ENCODE measurements at regions of chrX and their contacts with region 1.

Region 1: GRCh38 chrX:136780763-136781162 is at the start of gene ARHGEF6:
- DNase-seq: no peak
- H3K4me3 Mint-ChIP-seq: peak within 1 kb of the TSS; percentile 90
- H3K27ac Mint-ChIP-seq: peak within 1 kb of the TSS; percentile 97
- H3K4me1 Mint-ChIP-seq: peaks cover 56% of the 10 kb centered on the region
- H3K27me3 Mint-ChIP-seq: no peaks in the 10 kb centered on the region
- total RNA-seq, gene ARHGEF6: 77.2 and 77.9 TPM in 2 replicates

Region 2: DNA sequence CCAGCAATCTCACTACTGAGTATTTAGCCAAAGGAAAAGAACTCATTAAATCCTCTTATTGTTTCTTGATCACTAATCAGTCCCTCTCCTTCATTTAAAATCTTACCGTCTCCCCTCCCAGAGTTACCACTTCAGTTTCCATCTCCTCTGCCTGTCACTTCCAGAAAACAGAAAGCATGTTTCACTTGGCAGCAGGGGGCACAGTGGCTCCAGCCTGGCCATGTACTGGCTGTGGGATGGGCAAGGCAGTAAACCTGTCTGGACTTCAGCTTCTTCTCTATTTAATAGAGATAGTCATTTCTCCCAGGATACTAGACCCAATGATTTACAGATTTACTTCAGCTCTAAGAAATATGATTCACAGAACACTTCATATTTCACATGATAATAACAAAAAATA is 69.6 kb before region 1 on chrX:
- intact Hi-C with region 1: loop called (anchors 5 kb)
- DNase-seq: no peak
- H3K4me3 Mint-ChIP-seq: no peak overlapping the region
- H3K27ac Mint-ChIP-seq: peak overlapping the region; percentile 95
- H3K4me1 Mint-ChIP-seq: peaks cover 44% of the 10 kb centered on the region
- H3K27me3 Mint-ChIP-seq: no peaks in the 10 kb centered on the region

Region 3: GRCh38 chrX:136747003-136747986 is 33.5 kb before region 1 on chrX:
- intact Hi-C with region 1: loop called (anchors 2 kb)
- DNase-seq: no peak
- H3K4me3 Mint-ChIP-seq: peak overlapping the region; percentile 30
- H3K27ac Mint-ChIP-seq: peak overlapping the region; percentile 77
- H3K4me1 Mint-ChIP-seq: peaks cover 82% of the 10 kb centered on the region
- H3K27me3 Mint-ChIP-seq: no peaks in the 10 kb centered on the region

Region 4: GRCh38 chrX:136812286-136812685 is 31.5 kb after region 1 on chrX:
- intact Hi-C with region 1: loop called (anchors 2 kb)
- DNase-seq: no peak
- H3K4me3 Mint-ChIP-seq: no peak overlapping the region
- H3K27ac Mint-ChIP-seq: no peak overlapping the region
- H3K4me1 Mint-ChIP-seq: peaks cover 36% of the 10 kb centered on the region
- H3K27me3 Mint-ChIP-seq: no peaks in the 10 kb centered on the region

Region 5: GRCh38 chrX:136866337-136867095 is 85.8 kb after region 1 on chrX:
- intact Hi-C with region 1: loop called (anchors 5 kb)
- DNase-seq: no peak
- H3K4me3 Mint-ChIP-seq: no peak overlapping the region
- H3K27ac Mint-ChIP-seq: peak overlapping the region; percentile 28
- H3K4me1 Mint-ChIP-seq: peaks cover 28% of the 10 kb centered on the region
- H3K27me3 Mint-ChIP-seq: no peaks in the 10 kb centered on the region